A673 (cell line): ENCODE measurements at regions of chr1 and their contacts with region 1.

Region 1: DNA sequence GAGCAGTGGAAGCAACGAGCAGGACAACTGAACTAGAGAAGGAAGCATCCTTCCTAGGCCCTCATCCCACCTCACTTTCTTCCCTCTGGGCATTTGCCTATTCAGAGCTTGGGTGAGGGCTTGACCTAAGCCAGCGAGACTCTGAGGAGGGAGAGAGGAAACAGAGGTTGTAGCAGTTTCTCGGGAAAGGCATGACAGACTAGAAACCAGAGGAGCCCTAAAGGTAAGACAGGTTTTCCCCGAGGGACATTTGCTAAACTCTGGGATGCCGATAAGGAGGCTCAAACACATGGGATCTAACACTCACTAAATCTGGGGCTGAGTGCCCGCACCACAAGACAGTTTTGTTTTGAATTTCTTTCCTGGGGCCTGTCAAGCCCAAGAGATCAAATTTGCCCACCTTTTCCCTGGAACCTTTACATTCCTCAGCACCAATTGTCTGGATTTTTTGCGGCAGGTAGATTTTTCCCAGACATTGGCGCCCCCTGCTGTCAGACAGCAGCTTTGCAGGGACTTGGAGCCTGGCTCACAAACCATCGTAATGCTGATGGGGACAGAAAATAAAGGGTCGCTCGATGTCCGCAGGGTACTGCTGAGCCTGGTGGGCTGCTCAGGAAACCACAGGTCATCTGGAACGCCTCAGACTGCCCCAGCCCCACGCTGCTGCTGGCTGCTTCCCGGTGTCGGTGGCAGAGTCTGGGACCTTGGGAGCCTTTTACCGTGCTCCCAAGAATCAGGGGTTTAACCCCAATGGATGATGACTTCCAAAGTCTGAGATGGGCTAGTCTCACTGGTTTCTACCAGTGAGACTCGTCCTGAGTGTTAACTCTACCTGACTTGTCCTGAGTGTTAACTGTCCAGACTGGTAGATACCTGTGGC is 23.4 kb upstream of the TSPAN2 start:
- DNase-seq: peak; percentile 40
- H3K4me3 ChIP-seq: no peak overlapping the region
- H3K27ac ChIP-seq: no peak overlapping the region
- H3K4me1 ChIP-seq: no peaks in the 10 kb centered on the region
- H3K27me3 ChIP-seq: no peaks in the 10 kb centered on the region
- CTCF ChIP-seq: peak; percentile 95

Region 2: DNA sequence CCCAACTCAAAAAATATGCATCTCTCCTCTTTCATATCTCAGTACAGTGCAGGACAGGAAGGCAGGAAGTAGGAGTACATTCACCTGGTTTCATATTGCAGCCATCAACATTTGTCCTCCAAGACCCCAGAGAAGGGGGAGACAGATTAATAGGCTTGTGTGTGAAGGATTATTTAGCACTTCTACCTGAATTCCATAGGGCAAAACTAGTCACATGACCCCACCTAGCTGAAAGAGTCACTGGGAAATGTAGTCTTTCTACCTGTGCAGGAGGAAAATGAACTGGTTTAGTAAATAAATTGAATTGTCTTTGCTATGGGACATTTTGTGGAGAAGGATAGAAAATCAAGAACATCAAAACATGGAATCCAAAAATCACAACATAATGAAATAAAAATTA is 587.8 kb before region 1 on chr1:
- CTCF ChIA-PET with region 1: no interaction called
- POLR2A ChIA-PET with region 1: no interaction called
- intact Hi-C with region 1: no loop called
- DNase-seq: no peak
- H3K4me3 ChIP-seq: no peak overlapping the region
- H3K27ac ChIP-seq: no peak overlapping the region
- H3K4me1 ChIP-seq: no peaks in the 10 kb centered on the region
- H3K27me3 ChIP-seq: no peaks in the 10 kb centered on the region
- CTCF ChIP-seq: no peak

Region 3: GRCh38 chr1:115052454-115053083 is 60.2 kb before region 1 on chr1:
- CTCF ChIA-PET with region 1: no interaction called
- POLR2A ChIA-PET with region 1: no interaction called
- intact Hi-C with region 1: loop called (anchors 5 kb)
- DNase-seq: peak; percentile 76
- H3K4me3 ChIP-seq: no peak overlapping the region
- H3K27ac ChIP-seq: no peak overlapping the region
- H3K4me1 ChIP-seq: no peaks in the 10 kb centered on the region
- H3K27me3 ChIP-seq: no peaks in the 10 kb centered on the region
- CTCF ChIP-seq: peak; percentile 94